ENCODE measurements at regions of chr2 and their contacts with region 1.

Region 1: GRCh38 chr2:9753276-9753600 is 90.0 kb upstream of the TAF1B start:
- DNase-seq: peak; percentile 88 to 92
- ATAC-seq: peak; percentile 81 to 91
- H3K4me3 ChIP-seq: peak overlapping the region; percentile 35
- H3K27ac ChIP-seq: peak overlapping the region; percentile 87 to 93
- H3K4me1 ChIP-seq: peaks cover 48% of the 10 kb centered on the region
- CTCF ChIP-seq: no peak
- EP300 ChIP-seq: no peak
- POLR2A ChIP-seq: peak; percentile 30; the same call in 1 of the 2 replicates
- RAD21 ChIP-seq: no peak; a peak in 1 of 5 replicates

Region 2: DNA sequence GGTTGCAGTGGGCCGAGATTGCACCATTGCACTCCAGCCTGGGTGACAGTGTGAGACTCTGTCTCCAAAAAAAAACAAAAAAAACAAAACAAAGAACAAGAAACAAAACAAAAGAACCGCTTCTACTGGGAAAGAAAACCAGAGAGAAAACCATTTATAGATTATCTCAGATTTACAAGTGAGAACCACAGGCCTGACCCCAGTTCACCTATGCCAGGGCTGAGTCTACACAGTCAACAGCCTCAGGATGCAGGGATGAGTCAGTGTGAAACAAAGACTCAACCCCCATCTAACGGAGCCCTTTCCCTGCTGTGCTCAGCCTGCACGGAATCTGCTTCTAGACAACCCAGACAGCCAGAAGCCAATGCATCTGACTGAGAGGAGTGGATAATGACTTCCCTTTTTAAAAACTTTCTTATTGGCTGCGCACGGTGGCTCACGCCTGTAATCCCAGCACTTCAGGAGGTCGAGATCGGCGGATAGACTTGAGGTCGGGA is 96.9 kb before region 1 on chr2:
- CTCF ChIA-PET with region 1: interaction called, 3 read pairs
- POLR2A ChIA-PET with region 1: interaction called, 10 read pairs
- DNase-seq: peak; percentile 90 to 95
- ATAC-seq: peak; percentile 91 to 94
- H3K4me3 ChIP-seq: no peak overlapping the region
- H3K27ac ChIP-seq: peak overlapping the region; percentile 84 to 86
- H3K4me1 ChIP-seq: peaks cover 50% of the 10 kb centered on the region
- CTCF ChIP-seq: no peak
- EP300 ChIP-seq: peak in 1 of 2 experiments; percentile 60; a peak in 1 of 5 replicates
- POLR2A ChIP-seq: no peak
- RAD21 ChIP-seq: peak; percentile 41 to 43

Region 3: DNA sequence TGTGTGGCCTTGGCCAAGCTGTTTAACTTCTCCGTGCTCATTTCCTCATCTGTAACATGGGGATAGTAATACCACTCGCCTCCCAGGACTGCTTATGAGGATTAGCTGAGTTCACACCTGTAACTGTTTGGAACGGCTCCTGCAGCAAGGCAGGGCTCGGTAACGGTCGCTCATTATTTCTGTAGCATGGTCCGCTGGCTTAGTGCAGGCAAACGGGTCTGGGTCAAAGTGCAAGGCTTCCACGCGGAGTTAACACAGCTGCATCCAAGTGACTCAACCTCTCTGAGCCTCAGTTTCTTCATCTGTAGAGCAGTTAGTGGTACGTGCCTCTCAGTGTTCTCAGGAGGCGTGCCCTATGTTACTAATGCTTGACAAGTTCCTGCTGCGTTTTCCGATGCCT is 28.1 kb before region 1 on chr2:
- CTCF ChIA-PET with region 1: no interaction called
- POLR2A ChIA-PET with region 1: no interaction called
- DNase-seq: no peak
- ATAC-seq: no peak
- H3K4me3 ChIP-seq: no peak overlapping the region
- H3K27ac ChIP-seq: no peak overlapping the region
- H3K4me1 ChIP-seq: no peaks in the 10 kb centered on the region
- CTCF ChIP-seq: no peak
- EP300 ChIP-seq: no peak
- POLR2A ChIP-seq: no peak
- RAD21 ChIP-seq: no peak

Region 4: DNA sequence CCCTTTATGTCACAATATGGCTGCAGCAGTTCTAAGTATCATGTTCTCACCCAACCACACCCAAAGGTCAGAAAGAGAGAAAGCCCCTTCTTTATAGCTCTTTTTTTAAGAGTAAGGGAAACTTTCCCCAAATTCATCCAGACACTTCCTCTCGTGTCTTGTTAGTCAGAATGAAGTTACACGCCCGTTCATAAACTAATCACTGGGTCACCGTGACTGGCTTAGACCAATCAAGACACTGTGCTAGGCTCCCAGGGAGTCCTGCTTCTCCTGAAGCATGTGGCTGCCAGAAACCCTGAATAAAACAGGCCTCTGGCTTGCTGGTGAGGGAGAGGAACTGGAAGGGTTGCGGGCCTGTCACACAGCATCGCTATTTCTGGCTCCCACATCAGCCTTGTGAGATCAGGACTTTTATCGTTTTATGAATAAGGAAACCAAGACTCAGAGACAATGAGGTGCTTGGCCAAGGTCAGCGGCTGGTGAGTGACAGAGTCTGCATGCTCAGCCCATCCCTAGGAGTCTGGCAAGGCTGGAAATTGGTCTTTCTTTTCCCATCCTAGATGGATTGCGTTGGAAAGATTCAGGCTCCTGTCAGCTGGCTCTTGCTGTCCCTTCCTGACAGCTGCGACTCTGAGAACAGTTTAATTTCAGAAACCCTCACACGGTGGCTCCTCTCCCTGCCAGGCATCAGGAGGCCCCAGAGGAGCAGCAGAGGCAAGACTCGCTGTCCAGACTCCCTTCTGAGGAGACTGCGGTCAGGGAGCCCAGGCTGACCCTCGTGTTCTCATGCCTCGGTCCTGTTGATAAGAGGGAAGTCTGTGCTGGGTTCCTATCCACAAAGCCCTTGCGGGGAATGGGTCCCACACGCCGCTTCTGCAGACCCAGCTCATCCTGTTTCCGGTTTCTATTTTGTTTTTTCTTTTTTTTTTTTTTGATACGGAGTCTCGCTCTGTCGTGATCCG is 14.4 kb before region 1 on chr2:
- CTCF ChIA-PET with region 1: interaction called, 14 read pairs
- POLR2A ChIA-PET with region 1: interaction called, 4 read pairs
- DNase-seq: no peak
- ATAC-seq: peak in 1 of 2 experiments; percentile 31; a peak in 3 of 6 replicates
- H3K4me3 ChIP-seq: no peak overlapping the region
- H3K27ac ChIP-seq: no peak overlapping the region
- H3K4me1 ChIP-seq: peaks cover 8% of the 10 kb centered on the region
- CTCF ChIP-seq: no peak
- EP300 ChIP-seq: no peak
- POLR2A ChIP-seq: no peak
- RAD21 ChIP-seq: no peak